PC-9 (cell line): ENCODE measurements at regions of chr6 and their contacts with region 1.

Region 1: GRCh38 chr6:73520688-73521350 is at the start of gene EEF1A1:
- DNase-seq: peak; percentile 98 to 99
- H3K4me3 ChIP-seq: peak within 1 kb of the TSS; percentile 89
- H3K27ac ChIP-seq: peak within 1 kb of the TSS; percentile 100
- H3K4me1 ChIP-seq: peaks cover 26% of the 10 kb centered on the region
- H3K27me3 ChIP-seq: no peaks in the 10 kb centered on the region
- CTCF ChIP-seq: no peak
- total RNA-seq, gene EEF1A1: 10,581 and 12,059 TPM in 2 replicates

Region 2: GRCh38 chr6:73566954-73567591 is 46.3 kb after region 1 on chr6:
- CTCF ChIA-PET with region 1: no interaction called
- POLR2A ChIA-PET with region 1: interaction called, 11 read pairs
- intact Hi-C with region 1: loop called (anchors 1 kb)
- DNase-seq: peak; percentile 55 to 75
- H3K4me3 ChIP-seq: no peak overlapping the region
- H3K27ac ChIP-seq: no peak overlapping the region
- H3K4me1 ChIP-seq: peaks cover 22% of the 10 kb centered on the region
- H3K27me3 ChIP-seq: no peaks in the 10 kb centered on the region
- CTCF ChIP-seq: no peak

Region 3: DNA sequence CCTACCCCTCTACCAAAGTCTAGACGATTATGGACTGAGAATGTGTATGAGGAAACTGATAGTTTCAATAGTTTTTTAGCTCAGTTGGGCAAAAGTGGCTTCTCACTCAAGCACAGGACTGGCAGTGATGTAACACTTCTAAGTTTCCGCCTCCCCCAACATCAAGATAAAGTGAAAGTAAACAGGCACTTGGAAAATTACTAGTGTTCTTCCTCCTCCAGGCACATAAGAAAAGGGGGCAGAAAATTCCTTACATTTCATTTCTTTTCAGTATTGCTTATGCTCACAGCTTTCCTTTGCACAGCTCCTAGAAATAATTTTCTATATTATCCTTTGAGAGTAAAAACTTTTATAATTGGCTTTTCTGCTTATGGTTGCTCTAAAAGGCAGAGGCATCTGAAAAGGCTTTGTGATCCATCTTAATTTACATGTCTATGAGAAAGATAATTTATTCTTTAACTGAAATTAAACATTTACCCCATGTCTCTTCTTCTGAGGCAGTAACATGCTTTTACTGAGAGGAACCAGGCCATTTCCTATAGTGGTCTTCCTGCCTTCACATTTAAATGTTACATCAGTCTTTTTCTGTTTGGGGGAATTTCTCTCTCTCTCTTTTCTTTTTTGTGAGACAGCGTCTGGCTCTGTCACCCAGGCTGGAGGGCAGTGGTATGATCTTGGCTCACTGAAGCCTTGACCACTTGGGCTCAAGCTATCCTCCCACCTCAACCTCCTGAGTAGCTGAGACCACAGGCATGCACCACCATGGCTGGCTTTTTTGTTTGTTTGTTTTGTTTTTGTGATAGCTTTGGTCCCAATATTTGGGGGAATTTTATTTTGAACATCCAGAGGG is 65.0 kb after region 1 on chr6:
- CTCF ChIA-PET with region 1: no interaction called
- POLR2A ChIA-PET with region 1: interaction called, 29 read pairs
- intact Hi-C with region 1: loop called (anchors 1 kb)
- DNase-seq: peak; percentile 49 to 88
- H3K4me3 ChIP-seq: peak overlapping the region; percentile 47; the same call in 1 of the 2 replicates
- H3K27ac ChIP-seq: peak overlapping the region; percentile 94
- H3K4me1 ChIP-seq: peaks cover 50% of the 10 kb centered on the region
- H3K27me3 ChIP-seq: no peaks in the 10 kb centered on the region
- CTCF ChIP-seq: no peak

Region 4: GRCh38 chr6:73610444-73611275 is 89.8 kb after region 1 on chr6:
- CTCF ChIA-PET with region 1: interaction called, 3 read pairs
- POLR2A ChIA-PET with region 1: interaction called, 6 read pairs
- intact Hi-C with region 1: loop called (anchors 1 kb)
- DNase-seq: peak in 1 of 2 experiments; percentile 56
- H3K4me3 ChIP-seq: no peak overlapping the region
- H3K27ac ChIP-seq: peak overlapping the region; percentile 42
- H3K4me1 ChIP-seq: peaks cover 10% of the 10 kb centered on the region; the same call in 1 of the 2 replicates
- H3K27me3 ChIP-seq: no peaks in the 10 kb centered on the region
- CTCF ChIP-seq: peak; percentile 77

Region 5: DNA sequence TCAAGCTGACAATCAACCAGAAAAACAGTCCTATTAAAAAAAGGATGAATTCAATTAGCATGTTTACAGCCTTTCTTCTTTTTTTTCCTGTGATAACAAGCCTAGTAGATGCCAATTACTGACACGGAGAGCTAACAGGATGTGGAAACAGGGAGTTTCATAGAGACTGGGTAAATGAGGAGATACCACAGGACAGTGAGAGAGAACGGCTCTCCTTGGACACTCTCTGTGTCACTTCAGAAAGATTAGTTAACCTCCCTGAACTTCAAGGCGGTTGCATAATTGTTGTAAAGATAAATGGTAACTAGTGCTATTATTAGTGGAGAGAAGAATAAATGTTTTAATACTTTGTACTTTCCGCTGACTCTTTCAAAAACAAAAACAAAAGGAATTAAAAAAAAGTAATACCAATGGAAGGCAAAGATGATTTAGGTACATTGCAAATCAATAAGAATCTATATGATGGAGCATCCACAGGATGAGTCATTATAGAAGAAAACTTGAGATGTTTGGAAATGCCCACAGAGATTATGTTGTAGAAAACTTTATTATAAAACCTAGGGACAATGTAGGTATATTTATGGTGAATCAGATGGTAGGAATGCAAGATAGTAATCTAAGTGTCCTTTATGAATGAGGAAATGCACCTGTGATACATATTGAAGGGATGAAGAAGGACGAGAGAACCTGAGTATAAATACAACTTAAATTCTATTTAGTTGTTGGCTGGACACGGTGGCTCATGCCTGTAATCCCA is 118.4 kb after region 1 on chr6:
- CTCF ChIA-PET with region 1: no interaction called
- POLR2A ChIA-PET with region 1: no interaction called
- intact Hi-C with region 1: loop called (anchors 1 kb)
- DNase-seq: peak in 1 of 2 experiments; percentile 97
- H3K4me3 ChIP-seq: no peak overlapping the region
- H3K27ac ChIP-seq: peak overlapping the region; percentile 76
- H3K4me1 ChIP-seq: peaks cover 58% of the 10 kb centered on the region
- H3K27me3 ChIP-seq: no peaks in the 10 kb centered on the region
- CTCF ChIP-seq: no peak

Region 6: DNA sequence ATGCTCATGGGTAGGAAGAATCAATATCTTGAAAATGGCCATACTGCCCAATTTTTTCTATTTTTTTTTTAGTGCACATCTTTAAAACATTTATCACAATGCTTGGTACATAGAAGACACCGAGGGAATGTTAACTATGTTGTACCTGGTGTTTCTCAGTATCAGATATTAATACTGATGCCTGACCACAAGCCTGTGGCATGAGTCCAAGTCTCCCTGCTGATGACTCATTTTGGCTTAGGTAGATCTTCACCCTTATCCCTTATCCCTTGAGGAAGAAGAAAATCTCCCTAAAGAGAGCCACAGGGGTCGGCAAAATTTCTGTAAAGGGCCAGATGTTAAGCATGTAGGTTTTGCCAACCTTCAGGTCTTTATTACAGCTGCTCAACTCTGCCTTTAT is 189.7 kb after region 1 on chr6:
- CTCF ChIA-PET with region 1: no interaction called
- POLR2A ChIA-PET with region 1: no interaction called
- intact Hi-C with region 1: loop called (anchors 5 kb)
- DNase-seq: peak; percentile 86 to 92
- H3K4me3 ChIP-seq: no peak overlapping the region
- H3K27ac ChIP-seq: peak overlapping the region; percentile 33
- H3K4me1 ChIP-seq: peaks cover 19% of the 10 kb centered on the region
- H3K27me3 ChIP-seq: no peaks in the 10 kb centered on the region
- CTCF ChIP-seq: no peak

Region 7: GRCh38 chr6:73774311-73774787 is 253.5 kb after region 1 on chr6:
- CTCF ChIA-PET with region 1: no interaction called
- POLR2A ChIA-PET with region 1: interaction called, 13 read pairs
- intact Hi-C with region 1: no loop called
- DNase-seq: peak; percentile 80 to 97
- H3K4me3 ChIP-seq: peak overlapping the region; percentile 11; the same call in 1 of the 2 replicates
- H3K27ac ChIP-seq: peak overlapping the region; percentile 69
- H3K4me1 ChIP-seq: peaks cover 31% of the 10 kb centered on the region
- H3K27me3 ChIP-seq: no peaks in the 10 kb centered on the region
- CTCF ChIP-seq: no peak